A549 (cell line): ENCODE measurements at regions of chr15 and their contacts with region 1.

Region 1: DNA sequence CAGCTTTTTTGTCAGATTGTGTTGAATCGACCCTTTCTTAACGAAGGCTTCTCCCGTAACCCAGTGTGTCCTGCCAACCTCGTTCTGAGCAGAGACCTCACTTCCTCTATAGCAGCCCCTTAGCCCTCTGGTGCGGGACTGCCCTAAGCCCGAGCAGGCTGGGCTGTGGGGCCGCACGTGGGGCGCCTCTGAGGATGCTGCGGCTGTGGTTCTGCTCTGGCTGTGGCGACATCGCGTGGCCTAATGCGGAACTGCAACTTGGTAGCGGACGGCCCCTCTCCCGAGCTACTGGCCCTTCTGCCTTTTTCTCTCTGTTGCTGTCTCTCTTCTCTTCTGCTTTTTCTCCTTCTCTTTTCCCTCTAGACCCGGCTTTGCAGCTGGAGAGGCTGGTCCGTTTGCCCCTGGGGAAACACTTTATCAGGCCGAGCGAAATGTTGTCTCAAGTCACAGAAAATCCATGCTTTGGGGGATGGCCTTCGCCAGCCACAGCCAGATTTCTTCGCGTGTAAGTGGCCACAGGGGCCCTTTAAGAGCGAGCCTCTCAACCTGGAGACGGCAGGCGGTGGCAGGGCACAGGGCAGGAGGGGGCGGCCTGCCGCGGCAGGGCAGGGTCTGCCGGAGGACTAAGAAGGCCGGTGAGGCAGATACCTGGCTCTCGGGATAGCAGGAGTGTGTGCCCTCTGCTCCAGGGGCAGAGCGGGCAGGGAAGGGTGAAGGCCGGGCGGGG is 19.4 kb upstream of the KIF23 start:
- DNase-seq: peak; percentile 74 to 93
- ATAC-seq: peak; percentile 81 to 93
- H3K4me3 ChIP-seq: no peak overlapping the region
- H3K27ac ChIP-seq: peak overlapping the region; percentile 24 to 66; a peak in 5 of 6 replicates
- H3K4me1 ChIP-seq: peaks cover 26% of the 10 kb centered on the region
- CTCF ChIP-seq: peak; percentile 90
- EP300 ChIP-seq: no peak
- POLR2A ChIP-seq: no peak
- RAD21 ChIP-seq: peak; percentile 92 to 94

Region 2: GRCh38 chr15:69067296-69067695 is 327.4 kb before region 1 on chr15:
- CTCF ChIA-PET with region 1: interaction called, 31 read pairs
- POLR2A ChIA-PET with region 1: no interaction called
- DNase-seq: no peak
- ATAC-seq: no peak
- H3K4me3 ChIP-seq: no peak overlapping the region
- H3K27ac ChIP-seq: peak overlapping the region in 1 of 2 experiments; percentile 15; a peak in 1 of 6 replicates
- H3K4me1 ChIP-seq: peaks cover 9% of the 10 kb centered on the region
- CTCF ChIP-seq: no peak
- EP300 ChIP-seq: no peak
- POLR2A ChIP-seq: no peak
- RAD21 ChIP-seq: no peak

Region 3: DNA sequence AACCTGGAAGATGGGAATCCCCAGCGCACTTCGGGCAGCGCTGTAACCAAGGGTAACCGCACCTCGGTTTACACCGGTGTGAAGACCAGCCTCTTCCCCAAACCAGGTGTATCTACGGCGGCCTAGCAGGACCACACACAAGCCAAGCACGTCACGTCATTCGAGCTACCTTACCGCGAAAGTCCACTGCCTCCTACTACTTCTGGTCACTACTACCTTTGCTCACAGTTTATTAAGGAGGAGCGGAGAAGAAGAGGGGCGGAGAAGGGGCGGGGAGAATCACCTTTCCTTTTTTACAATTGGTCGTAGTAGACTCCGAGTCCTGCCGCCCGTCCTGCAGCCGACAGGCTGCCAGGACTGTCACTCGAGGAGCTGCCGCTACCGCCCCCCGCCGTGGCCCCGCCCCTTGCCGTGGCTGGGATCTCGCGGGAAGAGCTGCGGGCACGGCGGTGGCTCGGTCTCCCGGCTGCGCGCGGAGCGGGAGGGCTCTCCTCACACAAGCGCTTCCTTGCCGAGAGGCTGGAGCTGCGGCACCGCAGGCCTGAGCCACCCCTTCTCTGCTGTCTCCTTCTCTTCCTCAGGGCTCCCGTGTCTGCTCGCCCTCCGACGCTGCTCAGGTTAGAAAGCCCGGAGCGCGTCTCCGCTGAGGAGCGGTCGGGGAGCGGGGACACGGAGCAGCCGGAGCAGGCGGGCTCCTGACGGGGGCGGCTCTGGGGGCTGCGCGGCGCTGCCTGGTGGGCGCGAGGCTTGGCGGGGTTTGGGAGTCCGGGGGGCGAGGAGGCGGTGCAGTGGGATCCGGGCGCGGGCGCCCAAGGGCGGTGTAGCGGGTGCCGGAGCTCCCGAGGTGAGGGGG is 234.4 kb before region 1 on chr15 and contains the start of gene GLCE:
- CTCF ChIA-PET with region 1: interaction called, 51 read pairs
- POLR2A ChIA-PET with region 1: interaction called, 3 read pairs
- DNase-seq: peak; percentile 97 to 99
- ATAC-seq: peak; percentile 93 to 96
- H3K4me3 ChIP-seq: peak within 1 kb of the TSS; percentile 82
- H3K27ac ChIP-seq: peak within 1 kb of the TSS; percentile 84 to 89
- H3K4me1 ChIP-seq: peaks cover 22% of the 10 kb centered on the region
- CTCF ChIP-seq: 0 out of 3 replicates have a peak, but pooled peaks have one; percentile 4
- EP300 ChIP-seq: no peak
- POLR2A ChIP-seq: peak; percentile 96
- RAD21 ChIP-seq: peak in 1 of 2 experiments; percentile 12; a peak in 2 of 5 replicates
- polyA plus RNA-seq, gene GLCE: 41.8 TPM in 2 replicates

Region 4: GRCh38 chr15:69298697-69299441 is 95.8 kb before region 1 on chr15 and contains the start of gene PAQR5:
- CTCF ChIA-PET with region 1: interaction called, 18 read pairs
- POLR2A ChIA-PET with region 1: no interaction called
- DNase-seq: peak; percentile 63 to 92
- ATAC-seq: peak; percentile 77 to 84
- H3K4me3 ChIP-seq: peak within 1 kb of the TSS; percentile 95
- H3K27ac ChIP-seq: peak within 1 kb of the TSS; percentile 94 to 96
- H3K4me1 ChIP-seq: peaks cover 39% of the 10 kb centered on the region
- CTCF ChIP-seq: no peak
- EP300 ChIP-seq: no peak
- POLR2A ChIP-seq: peak; percentile 64
- RAD21 ChIP-seq: no peak; a peak in 1 of 5 replicates
- polyA plus RNA-seq, gene PAQR5: 114 and 158 TPM in 2 replicates

Region 5: GRCh38 chr15:69357773-69358771 is 36.6 kb before region 1 on chr15:
- CTCF ChIA-PET with region 1: interaction called, 28 read pairs
- POLR2A ChIA-PET with region 1: no interaction called
- DNase-seq: no peak
- ATAC-seq: peak in 1 of 2 experiments; percentile 24; a peak in 1 of 6 replicates
- H3K4me3 ChIP-seq: no peak overlapping the region
- H3K27ac ChIP-seq: peak overlapping the region in 1 of 2 experiments; percentile 11; a peak in 1 of 6 replicates
- H3K4me1 ChIP-seq: peaks cover 27% of the 10 kb centered on the region
- CTCF ChIP-seq: no peak
- EP300 ChIP-seq: no peak
- POLR2A ChIP-seq: no peak
- RAD21 ChIP-seq: no peak